ENCODE measurements at regions of chr5 and their contacts with region 1.

Region 1: DNA sequence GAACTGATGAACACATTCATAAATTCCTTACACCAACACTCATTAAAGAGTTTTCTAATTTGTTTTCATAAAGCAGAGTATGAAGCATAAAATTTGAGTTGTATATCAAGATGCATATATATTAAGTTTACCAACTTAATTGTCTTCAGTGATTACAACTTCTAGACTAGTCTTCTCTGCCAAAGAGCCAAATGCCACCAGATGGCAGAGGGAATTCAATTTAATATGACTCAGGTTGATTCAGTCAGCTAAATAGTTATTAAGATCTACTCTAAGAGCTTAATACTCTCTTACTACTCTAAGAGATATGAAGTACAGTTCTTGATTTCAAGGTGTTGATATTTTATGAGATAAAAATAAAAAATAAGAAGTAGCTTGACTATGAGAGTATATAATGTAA is 53.4 kb downstream of the CDH10 start:
- DNase-seq: no peak
- ATAC-seq: no peak
- H3K4me3 ChIP-seq: no peak overlapping the region
- H3K27ac ChIP-seq: no peak overlapping the region
- H3K4me1 ChIP-seq: no peaks in the 10 kb centered on the region
- H3K27me3 ChIP-seq: no peaks in the 10 kb centered on the region
- CTCF ChIP-seq: no peak

Region 2: DNA sequence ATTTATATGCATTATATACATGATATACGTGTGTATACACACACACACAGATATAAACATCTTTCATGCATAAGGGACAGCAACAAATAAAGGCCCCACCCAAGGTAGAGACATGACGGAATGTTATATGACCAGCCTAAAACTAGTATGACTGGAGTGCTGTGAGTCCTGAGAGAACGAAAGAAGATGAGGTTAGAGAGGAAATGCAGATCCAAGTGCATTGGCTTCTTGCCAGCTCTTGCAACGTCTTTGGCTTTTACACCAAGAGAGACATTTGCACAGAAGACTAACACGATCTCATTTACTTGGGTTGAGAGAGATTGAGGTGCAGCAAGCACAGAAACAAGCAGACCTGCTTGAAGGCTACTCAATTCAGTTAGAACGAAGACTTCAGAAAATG is 30.4 kb after region 1 on chr5:
- CTCF ChIA-PET with region 1: no interaction called
- POLR2A ChIA-PET with region 1: no interaction called
- intact Hi-C with region 1: loop called (anchors 1 kb)
- DNase-seq: peak; percentile 40
- ATAC-seq: no peak
- H3K4me3 ChIP-seq: no peak overlapping the region
- H3K27ac ChIP-seq: no peak overlapping the region
- H3K4me1 ChIP-seq: peaks cover 3% of the 10 kb centered on the region; the same call in 1 of the 2 replicates
- H3K27me3 ChIP-seq: no peaks in the 10 kb centered on the region
- CTCF ChIP-seq: no peak

Measured in PC-3 (cell line).